Activated T-helper 1 cell treated with anti-CD3 and anti-CD28 coated beads, Interleukin-12 subunit alpha, Interleukin-12 subunit beta, Interleukin-2, Interleukin-4 antibody, amounts not matched to agents 30 ng/mL and 10 ng/mL and 1 ng/mL, durations not matched to agents 14 hours and 24 hours and 36 hours (primary cell): ENCODE measurements at regions of chr17 and their contacts with region 1.

Region 1: DNA sequence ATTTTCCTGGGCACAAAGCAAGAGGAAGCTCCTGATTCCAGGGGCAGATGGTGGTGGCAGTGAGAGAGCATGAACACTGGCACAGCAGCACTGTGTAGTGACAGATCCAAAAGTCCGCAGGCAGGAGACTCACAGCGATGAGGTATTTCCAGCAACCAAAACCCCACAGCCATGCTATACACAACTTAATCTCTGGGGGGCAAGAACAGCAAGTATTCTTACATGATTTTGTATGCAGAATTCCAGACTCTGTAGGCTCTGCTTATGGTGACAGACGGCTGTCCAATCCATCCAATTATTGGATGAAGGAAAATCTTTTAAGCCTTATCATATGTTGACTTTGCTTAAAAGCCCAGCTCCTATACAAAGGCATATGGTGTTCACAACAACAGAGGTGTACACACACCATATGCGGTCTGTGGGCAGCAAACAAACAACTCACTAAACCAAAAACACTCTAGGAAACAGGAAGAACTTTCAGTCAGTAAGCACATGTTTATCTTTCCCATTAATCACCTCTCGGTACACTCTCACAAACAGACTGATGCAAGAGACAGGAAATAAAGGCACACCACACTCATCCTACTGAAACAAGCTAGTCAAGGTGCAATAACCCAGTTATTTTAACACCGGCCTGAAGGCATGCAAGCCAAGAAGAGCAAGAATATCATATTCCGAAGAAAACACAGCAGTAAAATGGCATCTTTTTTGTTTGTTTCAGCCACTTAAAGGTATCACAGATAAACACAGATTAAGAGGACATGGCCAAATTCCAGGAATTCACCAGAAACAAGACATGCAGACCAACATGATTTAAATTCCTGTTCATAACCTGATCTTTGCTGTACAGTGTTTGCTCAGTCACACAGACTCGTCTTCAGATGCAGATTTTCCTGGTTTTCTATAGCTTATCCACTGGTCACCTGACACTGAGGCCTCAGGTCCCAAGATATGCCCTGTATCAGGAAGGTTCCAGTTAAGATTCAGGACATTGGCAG is 47.8 kb downstream of the ERN1 start:
- DNase-seq: peak; percentile 53
- H3K4me3 Mint-ChIP-seq: peak overlapping the region; percentile 60
- H3K27ac Mint-ChIP-seq: no peak overlapping the region
- H3K4me1 Mint-ChIP-seq: peaks cover 8% of the 10 kb centered on the region
- H3K27me3 Mint-ChIP-seq: no peaks in the 10 kb centered on the region

Region 2: GRCh38 chr17:63998050-63998720 is 83.9 kb before region 1 on chr17 and contains the start of gene PRR29:
- intact Hi-C with region 1: no loop called
- DNase-seq: peak; percentile 71
- H3K4me3 Mint-ChIP-seq: peak within 1 kb of the TSS; percentile 85
- H3K27ac Mint-ChIP-seq: peak within 1 kb of the TSS; percentile 52
- H3K4me1 Mint-ChIP-seq: peaks cover 43% of the 10 kb centered on the region
- H3K27me3 Mint-ChIP-seq: peaks cover 17% of the 10 kb centered on the region
- total RNA-seq, gene PRR29: 0.44 and 0.91 TPM in 2 replicates

Region 3: DNA sequence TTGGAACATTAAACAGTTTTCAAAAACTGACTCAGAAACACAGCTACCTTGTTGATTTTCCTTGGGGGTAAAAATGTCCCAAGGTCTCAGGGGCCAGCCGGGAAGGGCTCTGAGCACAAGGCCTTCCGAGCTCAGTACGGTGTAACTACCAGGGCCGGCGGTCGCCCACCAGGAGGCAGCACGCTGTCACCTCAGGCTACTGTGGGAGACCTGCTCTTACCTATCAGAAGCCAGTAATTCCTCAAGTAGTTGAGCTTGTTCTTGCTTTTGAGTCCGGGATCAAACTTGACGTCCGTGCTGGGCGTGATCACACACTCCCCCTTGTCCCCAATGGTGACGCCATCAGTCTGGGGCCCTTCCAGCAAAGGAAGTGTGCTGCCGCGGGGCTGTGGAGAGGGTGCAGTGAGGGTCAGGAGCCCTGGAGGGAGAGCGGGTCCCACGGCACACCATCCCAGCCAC is 18.3 kb before region 1 on chr17:
- intact Hi-C with region 1: loop called (anchors 1 kb)
- DNase-seq: peak; percentile 23
- H3K4me3 Mint-ChIP-seq: no peak overlapping the region
- H3K27ac Mint-ChIP-seq: peak overlapping the region; percentile 63
- H3K4me1 Mint-ChIP-seq: peaks cover 91% of the 10 kb centered on the region
- H3K27me3 Mint-ChIP-seq: no peaks in the 10 kb centered on the region

Region 4: DNA sequence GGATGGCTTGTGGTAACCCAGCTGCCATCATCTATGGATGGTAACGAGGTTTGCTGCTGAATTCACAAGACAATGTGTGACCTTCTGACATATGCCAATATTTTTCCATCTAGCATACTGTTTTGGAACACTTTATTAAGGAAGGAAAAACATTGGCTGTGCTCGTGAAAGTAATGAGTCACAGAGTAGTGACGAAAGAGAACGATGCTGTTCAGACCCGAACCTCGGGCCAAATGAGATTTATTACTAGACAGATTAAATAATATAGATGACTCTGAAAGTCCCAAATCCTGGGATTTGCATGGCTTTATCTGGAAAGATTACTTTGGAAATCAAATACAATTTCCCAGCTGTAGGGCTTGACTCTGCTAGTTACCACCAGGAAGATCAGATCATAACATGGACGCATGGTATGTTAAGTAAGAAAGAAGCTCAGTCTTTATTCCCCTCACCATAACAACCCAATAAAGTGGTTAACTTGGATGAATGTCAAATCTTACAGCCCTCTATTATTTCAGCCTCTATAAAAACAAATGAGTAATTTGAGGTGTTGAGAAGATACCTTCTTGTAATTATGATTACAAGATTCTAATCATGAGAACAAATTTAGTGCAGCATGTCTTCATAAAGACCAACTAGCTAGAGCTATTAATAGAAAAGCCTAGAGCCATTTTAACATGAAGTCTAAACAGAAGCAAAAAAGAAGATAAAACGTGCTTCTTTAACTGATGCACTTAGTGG is 15.3 kb after region 1 on chr17:
- intact Hi-C with region 1: loop called (anchors 2 kb)
- DNase-seq: no peak
- H3K4me3 Mint-ChIP-seq: no peak overlapping the region
- H3K27ac Mint-ChIP-seq: peak overlapping the region; percentile 67
- H3K4me1 Mint-ChIP-seq: peaks cover 81% of the 10 kb centered on the region
- H3K27me3 Mint-ChIP-seq: no peaks in the 10 kb centered on the region

Region 5: GRCh38 chr17:64121878-64122277 is 39.8 kb after region 1 on chr17:
- intact Hi-C with region 1: loop called (anchors 1 kb)
- DNase-seq: no peak
- H3K4me3 Mint-ChIP-seq: no peak overlapping the region
- H3K27ac Mint-ChIP-seq: peak overlapping the region; percentile 98
- H3K4me1 Mint-ChIP-seq: peaks cover 87% of the 10 kb centered on the region
- H3K27me3 Mint-ChIP-seq: no peaks in the 10 kb centered on the region